ENCODE measurements at regions of chr10 and their contacts with region 1.

Region 1: GRCh38 chr10:77846718-77847630 is 79.6 kb downstream of the DLG5 start:
- DNase-seq: peak; percentile 74
- H3K4me3 ChIP-seq: no peak overlapping the region
- H3K27ac ChIP-seq: peak overlapping the region; percentile 89
- H3K4me1 ChIP-seq: peaks cover 23% of the 10 kb centered on the region
- H3K27me3 ChIP-seq: no peaks in the 10 kb centered on the region
- CTCF ChIP-seq: peak; percentile 90 to 94
- POLR2A ChIP-seq: no peak

Region 2: DNA sequence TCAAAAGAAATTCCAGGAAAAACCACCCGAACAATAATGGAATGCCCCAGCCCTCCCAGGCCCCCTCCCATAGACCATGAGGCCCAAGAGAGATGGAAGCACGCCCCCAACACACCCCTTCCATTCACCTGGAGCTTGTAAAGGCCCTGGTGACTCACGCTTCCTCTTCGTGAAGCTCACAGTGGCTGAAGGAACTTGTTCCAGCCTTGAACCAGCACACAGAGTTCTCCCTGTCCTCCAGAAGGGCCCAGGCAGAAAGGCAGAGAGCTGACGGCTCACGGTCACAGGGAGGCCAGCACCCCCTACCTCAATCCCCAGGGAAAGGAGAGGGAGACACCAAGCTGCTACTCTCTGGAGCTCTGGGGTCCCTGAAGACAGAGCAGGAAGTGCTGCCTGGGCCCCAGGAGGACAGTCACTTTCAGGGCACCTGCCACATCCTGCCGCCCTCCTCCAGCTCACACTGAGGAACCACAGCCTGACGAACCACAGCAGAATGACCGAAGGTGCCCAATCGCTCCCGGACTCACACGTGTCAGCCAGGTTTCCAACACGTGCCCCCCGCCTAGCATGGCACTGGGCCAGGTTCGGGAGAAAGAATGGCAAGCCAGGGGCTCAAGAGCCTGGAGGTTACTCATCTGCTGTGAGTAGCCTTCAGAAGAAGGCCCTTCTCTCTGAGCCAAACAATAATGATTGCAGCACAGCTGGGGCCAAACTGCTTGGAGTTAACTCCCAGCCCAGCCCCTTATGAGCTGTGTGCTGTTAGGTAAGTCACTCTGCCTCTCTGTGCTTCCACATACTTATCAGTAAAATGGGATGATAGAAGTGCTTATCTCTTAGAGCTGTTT is 26.8 kb after region 1 on chr10:
- CTCF ChIA-PET with region 1: interaction called, 12 read pairs
- POLR2A ChIA-PET with region 1: no interaction called
- dilution Hi-C with region 1: no loop called
- intact Hi-C with region 1: loop called (anchors 2 kb)
- DNase-seq: peak; percentile 58
- H3K4me3 ChIP-seq: no peak overlapping the region
- H3K27ac ChIP-seq: peak overlapping the region; percentile 38
- H3K4me1 ChIP-seq: peaks cover 22% of the 10 kb centered on the region
- H3K27me3 ChIP-seq: no peaks in the 10 kb centered on the region
- CTCF ChIP-seq: no peak
- POLR2A ChIP-seq: no peak

Region 3: DNA sequence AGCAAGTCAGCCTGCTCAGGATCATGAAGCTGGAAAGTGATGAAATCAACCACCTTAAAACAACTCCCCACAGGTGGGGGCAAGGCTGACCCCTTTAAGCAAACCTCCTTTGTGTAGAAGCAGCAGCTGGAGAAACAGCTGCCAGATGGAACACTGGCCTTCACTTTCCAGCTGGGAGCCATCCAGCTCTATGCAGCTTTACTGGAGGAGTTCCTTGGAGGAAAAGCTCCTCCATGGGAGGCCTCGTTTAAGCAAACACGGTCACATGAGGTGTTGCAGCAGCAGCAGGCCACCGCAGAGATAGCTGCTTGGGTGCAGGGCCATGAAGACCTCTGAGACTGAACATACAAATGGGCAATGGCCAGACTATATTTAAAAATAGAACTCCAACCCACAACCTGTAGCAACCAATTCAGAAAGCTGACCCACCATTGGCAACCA is 92.6 kb after region 1 on chr10:
- CTCF ChIA-PET with region 1: interaction called, 10 read pairs
- POLR2A ChIA-PET with region 1: no interaction called
- dilution Hi-C with region 1: no loop called
- intact Hi-C with region 1: no loop called
- DNase-seq: no peak
- H3K4me3 ChIP-seq: no peak overlapping the region
- H3K27ac ChIP-seq: no peak overlapping the region
- H3K4me1 ChIP-seq: peaks cover 6% of the 10 kb centered on the region
- H3K27me3 ChIP-seq: peaks cover 0 to 2% of the 10 kb centered on the region in 2 experiments
- CTCF ChIP-seq: no peak
- POLR2A ChIP-seq: no peak

Region 4: GRCh38 chr10:77983384-77984341 is 136.7 kb after region 1 on chr10:
- CTCF ChIA-PET with region 1: interaction called, 58 read pairs
- POLR2A ChIA-PET with region 1: no interaction called
- dilution Hi-C with region 1: no loop called
- intact Hi-C with region 1: loop called (anchors 1 kb)
- DNase-seq: peak; percentile 89
- H3K4me3 ChIP-seq: no peak overlapping the region
- H3K27ac ChIP-seq: no peak overlapping the region
- H3K4me1 ChIP-seq: peaks cover 24% of the 10 kb centered on the region
- H3K27me3 ChIP-seq: no peaks in the 10 kb centered on the region
- CTCF ChIP-seq: no peak
- POLR2A ChIP-seq: no peak

Region 5: DNA sequence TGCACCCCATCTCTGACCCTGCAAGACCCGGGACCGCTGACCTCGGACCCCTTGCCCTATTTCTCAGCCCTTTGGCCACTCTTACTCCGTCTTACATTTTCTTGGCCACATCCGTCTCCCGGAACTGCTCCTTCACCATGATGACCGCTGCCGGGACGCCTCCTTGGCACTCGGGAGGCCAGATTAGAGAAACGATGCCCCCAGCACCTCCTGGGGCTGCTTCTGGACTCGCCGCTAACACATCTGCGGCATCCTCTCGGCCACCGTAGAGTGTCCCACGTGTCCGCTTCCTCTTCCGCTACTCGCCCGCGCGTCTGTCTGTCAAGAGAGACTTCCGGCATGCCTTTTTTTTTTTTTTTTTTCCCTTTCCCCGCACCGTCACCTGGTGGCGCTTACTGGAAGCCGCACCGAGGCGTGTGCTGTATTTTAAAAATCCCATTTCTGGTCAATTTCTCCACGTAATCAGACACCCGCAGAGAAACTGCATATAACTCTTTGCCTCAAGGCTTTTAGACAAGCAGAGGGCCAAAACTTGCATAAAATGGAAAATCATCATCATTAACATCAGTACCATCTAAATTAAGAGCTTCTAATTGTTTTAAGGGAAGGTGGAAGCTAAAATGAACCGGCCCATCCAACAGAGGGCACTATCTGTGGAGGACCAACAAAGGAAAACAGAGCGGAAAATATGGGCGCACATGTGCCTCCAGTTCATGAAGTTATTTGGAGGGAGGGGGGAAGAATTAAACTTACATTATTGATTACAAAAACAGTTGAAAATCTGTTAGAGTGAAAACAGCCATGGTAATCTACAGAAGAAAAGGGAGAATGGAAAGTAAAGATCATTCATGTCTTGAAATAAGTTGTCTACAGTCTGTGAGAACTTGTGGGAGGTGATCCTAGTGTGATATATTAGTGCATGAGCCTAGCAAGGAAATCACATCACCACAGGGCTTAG is 182.6 kb after region 1 on chr10 and contains the start of gene POLR3A:
- CTCF ChIA-PET with region 1: interaction called, 15 read pairs
- POLR2A ChIA-PET with region 1: no interaction called
- dilution Hi-C with region 1: no loop called
- intact Hi-C with region 1: loop called (anchors 1 kb)
- DNase-seq: peak; percentile 95
- H3K4me3 ChIP-seq: peak within 1 kb of the TSS; percentile 53 to 92 (median 82)
- H3K27ac ChIP-seq: peak within 1 kb of the TSS; percentile 63
- H3K4me1 ChIP-seq: peaks cover 34% of the 10 kb centered on the region
- H3K27me3 ChIP-seq: no peaks in the 10 kb centered on the region
- CTCF ChIP-seq: peak; percentile 58 to 66
- POLR2A ChIP-seq: peak; percentile 68
- total RNA-seq, gene POLR3A: 22.1 and 25.3 TPM in 2 replicates